ENCODE measurements at regions of chr13 and their contacts with region 1.

Region 1: DNA sequence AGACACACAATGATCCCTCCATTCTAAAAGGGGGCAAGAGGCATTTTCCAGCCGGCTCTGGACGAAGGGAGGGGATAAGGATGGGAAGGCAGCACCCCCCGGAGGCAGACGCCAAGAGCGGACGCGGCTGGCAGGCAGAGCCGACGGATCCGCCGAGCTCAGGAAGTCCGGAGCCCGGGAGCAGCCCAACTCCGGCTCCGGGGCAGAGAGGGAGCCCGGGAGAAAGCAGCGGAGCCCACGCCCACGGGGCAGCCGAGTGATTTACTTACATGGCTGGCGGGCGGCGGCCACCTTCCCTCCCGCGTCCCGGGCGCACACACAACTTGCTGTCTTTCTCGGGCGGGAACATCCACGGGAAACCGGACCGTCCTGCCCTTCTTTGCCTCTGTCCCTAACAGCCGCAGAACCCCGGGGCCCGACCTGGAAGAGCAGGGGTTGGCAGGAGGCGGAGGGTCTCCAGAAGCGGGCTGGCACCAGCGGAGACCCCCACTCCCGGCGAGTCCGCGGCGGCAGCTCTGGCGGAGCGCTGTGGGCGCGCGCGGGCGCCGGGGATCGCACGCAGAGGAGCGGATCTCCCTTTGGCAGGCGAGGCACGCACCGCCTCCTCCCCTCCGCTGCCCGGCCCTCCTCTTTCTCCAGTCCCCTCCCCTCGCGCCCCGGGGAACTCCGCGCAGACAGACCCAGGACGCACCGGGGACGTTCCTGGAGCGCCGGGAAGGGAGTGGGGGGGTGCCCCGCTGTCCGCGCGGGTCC is at the start of gene LHFPL6:
- DNase-seq: peak; percentile 83
- H3K4me3 Mint-ChIP-seq: peak within 1 kb of the TSS; percentile 76
- H3K27ac Mint-ChIP-seq: no peak within 1 kb of the TSS
- H3K4me1 Mint-ChIP-seq: peaks cover 14% of the 10 kb centered on the region
- H3K27me3 Mint-ChIP-seq: peaks cover 35% of the 10 kb centered on the region
- total RNA-seq, gene LHFPL6: 2.7 to 3.0 TPM

Region 2: GRCh38 chr13:39484506-39485313 is 118.1 kb before region 1 on chr13:
- CTCF ChIA-PET with region 1: no interaction called
- POLR2A ChIA-PET with region 1: no interaction called
- intact Hi-C with region 1: no loop called
- DNase-seq: no peak
- H3K4me3 Mint-ChIP-seq: no peak overlapping the region
- H3K27ac Mint-ChIP-seq: no peak overlapping the region
- H3K4me1 Mint-ChIP-seq: no peaks in the 10 kb centered on the region
- H3K27me3 Mint-ChIP-seq: no peaks in the 10 kb centered on the region

Region 3: DNA sequence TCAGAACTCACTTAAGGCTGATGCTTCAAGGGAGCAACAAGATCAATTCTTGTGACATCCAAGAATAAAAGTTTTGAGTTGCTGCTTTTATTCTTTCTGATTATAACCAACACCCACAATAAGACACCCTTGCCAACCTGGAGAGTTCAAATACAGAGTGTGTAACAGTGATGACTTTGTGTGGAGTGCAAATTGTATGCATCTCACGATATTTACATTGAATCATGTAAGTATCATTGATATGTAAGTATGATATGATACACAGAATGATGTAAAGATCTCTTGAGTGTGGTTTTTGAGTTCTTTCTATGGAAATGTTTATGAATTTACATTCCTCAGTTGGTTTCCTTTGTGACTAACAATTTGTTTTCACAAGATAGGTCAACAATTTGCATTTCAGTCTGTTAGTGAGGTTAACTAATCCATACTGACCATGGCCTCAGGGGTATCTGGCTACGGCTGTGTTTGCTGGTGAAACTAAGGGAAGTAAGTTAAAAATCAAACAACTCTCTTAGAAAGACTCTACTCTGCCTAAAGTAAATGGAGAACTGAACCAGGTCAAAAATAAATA is 12.2 kb before region 1 on chr13:
- CTCF ChIA-PET with region 1: interaction called, 3 read pairs
- POLR2A ChIA-PET with region 1: no interaction called
- intact Hi-C with region 1: loop called (anchors 1 kb)
- DNase-seq: no peak
- H3K4me3 Mint-ChIP-seq: no peak overlapping the region
- H3K27ac Mint-ChIP-seq: no peak overlapping the region
- H3K4me1 Mint-ChIP-seq: no peaks in the 10 kb centered on the region
- H3K27me3 Mint-ChIP-seq: peaks cover 3% of the 10 kb centered on the region

Region 4: GRCh38 chr13:39655569-39656324 is 53.0 kb after region 1 on chr13 and contains the start of gene COG6:
- CTCF ChIA-PET with region 1: no interaction called
- POLR2A ChIA-PET with region 1: no interaction called
- intact Hi-C with region 1: loop called (anchors 1 kb)
- DNase-seq: peak; percentile 96
- H3K4me3 Mint-ChIP-seq: peak within 1 kb of the TSS; percentile 91
- H3K27ac Mint-ChIP-seq: peak within 1 kb of the TSS; percentile 82
- H3K4me1 Mint-ChIP-seq: peaks cover 18% of the 10 kb centered on the region
- H3K27me3 Mint-ChIP-seq: no peaks in the 10 kb centered on the region
- total RNA-seq, gene COG6: 25.5 to 37.3 TPM

Region 5: GRCh38 chr13:40457929-40458719 is 855.3 kb after region 1 on chr13:
- CTCF ChIA-PET with region 1: no interaction called
- POLR2A ChIA-PET with region 1: no interaction called
- intact Hi-C with region 1: no loop called
- DNase-seq: no peak
- H3K4me3 Mint-ChIP-seq: no peak overlapping the region
- H3K27ac Mint-ChIP-seq: no peak overlapping the region
- H3K4me1 Mint-ChIP-seq: peaks cover 6% of the 10 kb centered on the region
- H3K27me3 Mint-ChIP-seq: no peaks in the 10 kb centered on the region